ENCODE measurements at regions of chr2 and their contacts with region 1.

Region 1: DNA sequence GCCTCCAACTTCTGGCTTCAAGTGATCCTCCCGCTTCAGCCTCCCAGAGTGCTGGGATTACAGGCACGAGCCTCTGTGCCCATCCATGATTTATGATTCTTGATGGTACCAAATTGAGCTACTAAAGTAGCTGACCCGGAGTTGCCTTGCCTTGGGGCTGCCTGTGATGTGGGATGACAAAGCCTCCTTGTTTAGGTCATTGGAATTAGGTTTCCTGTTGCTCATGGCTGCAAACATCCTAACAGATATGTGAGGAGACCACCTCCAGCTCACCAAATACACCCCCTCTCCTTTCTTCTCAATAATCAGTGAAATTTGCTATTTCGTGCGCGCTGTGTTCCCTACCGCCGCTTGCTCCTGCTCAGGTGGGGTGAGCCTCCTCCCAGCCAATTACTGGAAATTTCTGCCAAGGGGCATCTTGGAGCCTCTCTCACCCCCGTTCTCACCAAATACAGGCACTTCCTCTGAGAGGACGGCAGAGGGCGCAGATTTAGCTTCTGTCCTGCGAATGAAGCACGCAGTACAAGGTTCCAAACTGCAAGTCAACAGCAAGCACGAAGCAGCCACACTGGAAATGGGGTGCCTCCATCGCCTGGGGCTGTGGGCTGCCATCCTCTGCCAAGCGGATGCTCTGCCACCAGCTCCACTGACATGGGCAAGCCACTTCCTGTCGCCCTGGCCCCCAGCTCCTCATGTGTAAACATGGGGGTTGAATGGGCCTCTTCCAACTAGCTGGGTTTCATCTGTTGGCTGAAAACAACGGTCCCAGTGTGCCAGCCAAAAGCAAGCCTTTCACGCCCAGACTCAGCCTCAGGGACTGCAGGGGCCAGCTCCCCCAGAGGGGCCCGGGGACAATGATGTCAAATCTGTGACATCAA is 71.7 kb downstream of the NCAPH start:
- DNase-seq: peak in 5 of 6 donors; percentile 46 to 75 (median 63)
- ATAC-seq: peak; percentile 38 to 81 (median 71)
- H3K4me3 ChIP-seq: no peak overlapping the region
- H3K27ac ChIP-seq: peak overlapping the region; percentile 52 to 73 (median 66)
- H3K4me1 ChIP-seq: peaks cover 8 to 12% (median 10%) of the 10 kb centered on the region in 3 donors
- H3K27me3 ChIP-seq: no peaks in the 10 kb centered on the region
- CTCF ChIP-seq: peak; percentile 60 to 77 (median 66)

Region 2: GRCh38 chr2:96325041-96325883 is 82.0 kb before region 1 on chr2 and contains the start of gene ITPRIPL1:
- intact Hi-C with region 1: no loop called
- DNase-seq: peak in 2 of 6 donors; percentile 28 to 66
- ATAC-seq: peak; percentile 49 to 62 (median 60)
- H3K4me3 ChIP-seq: peak within 1 kb of the TSS; percentile 20 to 63 (median 52)
- H3K27ac ChIP-seq: no peak within 1 kb of the TSS
- H3K4me1 ChIP-seq: peaks cover 0 to 3% (median 0%) of the 10 kb centered on the region in 3 donors
- H3K27me3 ChIP-seq: peaks cover 0 to 15% (median 3%) of the 10 kb centered on the region in 4 donors
- CTCF ChIP-seq: no peak
- total RNA-seq, gene ITPRIPL1: 0.39 to 1.4 (median 0.77) TPM

Region 3: GRCh38 chr2:96509114-96509846 is 102.0 kb after region 1 on chr2:
- intact Hi-C with region 1: loop called in 2 of 3 experiments (anchors 2 to 5 kb)
- DNase-seq: peak; percentile 82 to 97 (median 96)
- ATAC-seq: peak; percentile 83 to 92 (median 86)
- H3K4me3 ChIP-seq: peak overlapping the region in 1 of 4 donors; percentile 2
- H3K27ac ChIP-seq: no peak overlapping the region
- H3K4me1 ChIP-seq: peaks cover 6 to 26% (median 10%) of the 10 kb centered on the region in 3 donors
- H3K27me3 ChIP-seq: no peaks in the 10 kb centered on the region
- CTCF ChIP-seq: peak; percentile 98 to 99 (median 98)

Region 4: GRCh38 chr2:96514521-96514920 is 107.2 kb after region 1 on chr2:
- intact Hi-C with region 1: loop called in 2 of 3 experiments (anchors 2 to 5 kb)
- DNase-seq: peak in 1 of 6 donors; percentile 0
- ATAC-seq: no peak
- H3K4me3 ChIP-seq: no peak overlapping the region
- H3K27ac ChIP-seq: no peak overlapping the region
- H3K4me1 ChIP-seq: no peaks in the 10 kb centered on the region
- H3K27me3 ChIP-seq: no peaks in the 10 kb centered on the region
- CTCF ChIP-seq: no peak

Region 5: DNA sequence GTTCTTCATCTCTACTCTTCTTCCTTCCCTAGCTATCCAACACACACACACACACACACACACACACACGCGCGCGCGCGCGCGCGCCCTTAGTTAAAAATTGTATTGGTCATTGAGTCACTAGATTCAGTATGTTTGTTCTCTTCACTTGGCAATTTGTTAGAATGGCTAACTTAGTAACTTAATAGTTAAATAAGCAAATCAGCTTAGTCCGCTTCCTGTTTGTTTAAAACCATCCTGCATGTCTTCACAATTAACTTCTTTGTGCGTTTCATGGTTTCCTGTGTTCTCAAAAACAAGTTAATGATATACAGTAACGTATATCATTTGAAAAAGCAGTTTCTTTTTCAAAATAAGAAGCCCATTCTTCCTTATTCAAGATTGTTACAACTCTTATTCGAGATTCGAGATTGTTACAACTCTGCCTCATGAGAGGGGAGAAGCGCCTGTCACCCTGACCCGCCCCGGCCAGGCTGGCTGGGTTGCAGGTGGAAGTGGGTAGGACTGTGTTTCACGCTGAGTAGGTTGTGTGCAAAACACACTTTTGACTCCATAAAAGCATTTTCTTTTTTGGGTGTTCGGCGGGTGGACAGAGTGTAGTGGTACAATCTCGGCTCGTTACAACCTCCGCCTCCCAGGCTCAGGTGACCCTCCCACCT is 399.3 kb after region 1 on chr2:
- intact Hi-C with region 1: no loop called
- DNase-seq: no peak
- ATAC-seq: peak in 2 of 4 donors; percentile 39 to 44
- H3K4me3 ChIP-seq: no peak overlapping the region
- H3K27ac ChIP-seq: peak overlapping the region in 1 of 4 donors; percentile 10
- H3K4me1 ChIP-seq: no peaks in the 10 kb centered on the region
- H3K27me3 ChIP-seq: no peaks in the 10 kb centered on the region
- CTCF ChIP-seq: no peak